ENCODE measurements at regions of chr6 and their contacts with region 1.

Region 1: GRCh38 chr6:15299430-15300131 is 53.7 kb downstream of the JARID2 start:
- DNase-seq: peak; percentile 46
- H3K4me3 Mint-ChIP-seq: no peak overlapping the region
- H3K27ac Mint-ChIP-seq: peak overlapping the region; percentile 50
- H3K4me1 Mint-ChIP-seq: peaks cover 79% of the 10 kb centered on the region
- H3K27me3 Mint-ChIP-seq: no peaks in the 10 kb centered on the region

Region 2: DNA sequence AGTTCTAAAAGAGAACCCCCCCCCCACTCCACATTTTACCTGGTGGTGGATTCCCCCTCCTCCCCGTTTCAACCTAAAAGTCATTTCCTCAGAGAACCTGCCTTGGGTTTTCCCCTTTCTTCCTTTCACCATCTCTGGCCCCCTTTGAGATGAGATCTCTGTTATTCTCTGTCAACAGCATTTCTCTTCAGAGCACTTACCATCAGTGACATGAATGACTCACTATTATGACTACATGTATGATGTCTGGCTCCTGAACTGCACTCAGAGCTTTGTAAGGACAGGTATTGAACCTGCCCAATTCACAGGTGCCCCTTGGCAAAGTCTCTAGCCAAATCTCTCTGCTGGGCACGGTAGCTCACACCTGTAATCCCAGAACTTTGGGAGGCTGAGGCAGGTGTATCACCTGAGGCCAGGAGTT is 115.1 kb before region 1 on chr6:
- CTCF ChIA-PET with region 1: no interaction called
- POLR2A ChIA-PET with region 1: no interaction called
- intact Hi-C with region 1: loop called (anchors 1 kb)
- DNase-seq: peak; percentile 58
- H3K4me3 Mint-ChIP-seq: peak overlapping the region; percentile 37
- H3K27ac Mint-ChIP-seq: peak overlapping the region; percentile 95
- H3K4me1 Mint-ChIP-seq: peaks cover 20% of the 10 kb centered on the region
- H3K27me3 Mint-ChIP-seq: no peaks in the 10 kb centered on the region

Region 3: DNA sequence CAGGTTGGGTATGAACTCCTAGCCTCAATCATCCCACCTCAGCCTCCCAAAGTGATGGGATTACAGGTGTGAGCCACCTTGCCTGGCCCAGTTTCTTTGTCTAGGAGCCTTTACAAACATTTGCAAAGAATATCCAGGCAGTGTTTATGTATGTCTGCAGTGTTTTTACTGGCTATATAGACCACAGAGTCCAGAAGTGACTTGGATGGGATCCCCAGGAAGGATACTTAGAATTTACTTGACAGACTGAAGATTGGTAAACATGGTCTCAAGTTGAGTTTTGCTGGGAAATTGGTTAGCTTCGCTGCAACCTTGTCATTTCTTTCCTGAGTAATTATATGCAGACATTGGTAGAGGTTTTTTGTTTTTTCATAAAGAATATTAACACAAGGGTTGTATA is 30.0 kb before region 1 on chr6:
- CTCF ChIA-PET with region 1: no interaction called
- POLR2A ChIA-PET with region 1: no interaction called
- intact Hi-C with region 1: loop called (anchors 2 kb)
- DNase-seq: no peak
- H3K4me3 Mint-ChIP-seq: no peak overlapping the region
- H3K27ac Mint-ChIP-seq: no peak overlapping the region
- H3K4me1 Mint-ChIP-seq: peaks cover 85% of the 10 kb centered on the region
- H3K27me3 Mint-ChIP-seq: no peaks in the 10 kb centered on the region

Region 4: DNA sequence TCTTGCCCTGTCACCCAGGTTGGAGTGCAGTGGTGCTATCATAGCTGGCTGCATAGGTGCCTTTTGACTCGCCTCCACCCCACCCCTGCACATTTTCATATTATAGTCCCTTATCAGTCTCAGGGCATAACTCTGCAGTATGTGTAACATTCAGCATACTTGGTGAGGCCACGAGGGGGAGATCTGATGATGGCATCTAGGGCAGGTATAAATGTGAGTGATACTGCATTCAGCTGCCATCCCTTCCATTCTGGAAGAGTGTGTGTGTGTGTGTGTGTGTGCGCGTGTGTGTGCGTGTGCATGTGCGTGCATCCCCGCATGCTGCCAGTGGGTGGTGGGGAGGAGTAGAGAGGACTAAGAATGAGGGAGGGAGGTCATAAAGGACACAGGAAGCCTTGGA is 27.7 kb after region 1 on chr6:
- CTCF ChIA-PET with region 1: no interaction called
- POLR2A ChIA-PET with region 1: no interaction called
- intact Hi-C with region 1: loop called (anchors 1 kb)
- DNase-seq: peak; percentile 66
- H3K4me3 Mint-ChIP-seq: peak overlapping the region; percentile 1
- H3K27ac Mint-ChIP-seq: peak overlapping the region; percentile 67
- H3K4me1 Mint-ChIP-seq: peaks cover 85% of the 10 kb centered on the region
- H3K27me3 Mint-ChIP-seq: no peaks in the 10 kb centered on the region

Region 5: DNA sequence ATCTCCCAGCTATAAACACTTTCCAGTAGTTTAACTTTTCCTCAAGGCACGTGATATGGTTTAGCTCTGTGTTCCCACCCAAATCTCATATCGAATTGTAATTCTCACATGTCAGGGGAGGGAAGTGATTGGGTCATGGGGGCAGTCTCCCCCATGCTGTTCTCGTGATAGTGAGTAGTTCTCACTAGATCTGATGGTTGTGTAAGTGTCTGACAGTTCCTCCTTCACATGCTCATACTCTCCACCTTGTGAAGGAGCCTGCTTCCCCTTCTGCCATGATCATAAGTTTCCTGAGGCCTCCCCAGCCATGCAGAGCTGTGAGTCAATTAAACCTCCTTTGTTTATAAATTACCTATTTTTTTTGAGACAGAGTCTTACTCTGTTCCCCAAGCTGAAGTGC is 235.4 kb after region 1 on chr6:
- CTCF ChIA-PET with region 1: no interaction called
- POLR2A ChIA-PET with region 1: no interaction called
- intact Hi-C with region 1: no loop called
- DNase-seq: no peak
- H3K4me3 Mint-ChIP-seq: no peak overlapping the region
- H3K27ac Mint-ChIP-seq: no peak overlapping the region
- H3K4me1 Mint-ChIP-seq: no peaks in the 10 kb centered on the region
- H3K27me3 Mint-ChIP-seq: no peaks in the 10 kb centered on the region